Activated T-helper 1 cell treated with anti-CD3 and anti-CD28 coated beads, Interleukin-12 subunit alpha, Interleukin-12 subunit beta, Interleukin-2, Interleukin-4 antibody, amounts not matched to agents 30 ng/mL and 10 ng/mL and 1 ng/mL, durations not matched to agents 14 hours and 24 hours and 36 hours (primary cell): ENCODE measurements at regions of chr15 and their contacts with region 1.

Region 1: GRCh38 chr15:58758138-58758537 is 8.6 kb upstream of the ADAM10 start:
- DNase-seq: no peak
- H3K4me3 Mint-ChIP-seq: no peak overlapping the region
- H3K27ac Mint-ChIP-seq: no peak overlapping the region
- H3K4me1 Mint-ChIP-seq: peaks cover 5% of the 10 kb centered on the region
- H3K27me3 Mint-ChIP-seq: peaks cover 6% of the 10 kb centered on the region

Region 2: GRCh38 chr15:58438956-58439355 is 319.2 kb before region 1 on chr15:
- intact Hi-C with region 1: loop called (anchors 5 kb)
- DNase-seq: peak; percentile 28
- H3K4me3 Mint-ChIP-seq: no peak overlapping the region
- H3K27ac Mint-ChIP-seq: no peak overlapping the region
- H3K4me1 Mint-ChIP-seq: peaks cover 39% of the 10 kb centered on the region
- H3K27me3 Mint-ChIP-seq: no peaks in the 10 kb centered on the region